ENCODE measurements at regions of chr19 and their contacts with region 1.

Region 1: GRCh38 chr19:15810335-15810734 is 5.1 kb downstream of the OR10H1 start:
- DNase-seq: peak; percentile 81
- ATAC-seq: peak; percentile 70
- H3K4me3 ChIP-seq: peak overlapping the region; percentile 36
- H3K27ac ChIP-seq: no peak overlapping the region
- H3K4me1 ChIP-seq: no peaks in the 10 kb centered on the region
- H3K27me3 ChIP-seq: no peaks in the 10 kb centered on the region
- CTCF ChIP-seq: peak; percentile 77

Region 2: DNA sequence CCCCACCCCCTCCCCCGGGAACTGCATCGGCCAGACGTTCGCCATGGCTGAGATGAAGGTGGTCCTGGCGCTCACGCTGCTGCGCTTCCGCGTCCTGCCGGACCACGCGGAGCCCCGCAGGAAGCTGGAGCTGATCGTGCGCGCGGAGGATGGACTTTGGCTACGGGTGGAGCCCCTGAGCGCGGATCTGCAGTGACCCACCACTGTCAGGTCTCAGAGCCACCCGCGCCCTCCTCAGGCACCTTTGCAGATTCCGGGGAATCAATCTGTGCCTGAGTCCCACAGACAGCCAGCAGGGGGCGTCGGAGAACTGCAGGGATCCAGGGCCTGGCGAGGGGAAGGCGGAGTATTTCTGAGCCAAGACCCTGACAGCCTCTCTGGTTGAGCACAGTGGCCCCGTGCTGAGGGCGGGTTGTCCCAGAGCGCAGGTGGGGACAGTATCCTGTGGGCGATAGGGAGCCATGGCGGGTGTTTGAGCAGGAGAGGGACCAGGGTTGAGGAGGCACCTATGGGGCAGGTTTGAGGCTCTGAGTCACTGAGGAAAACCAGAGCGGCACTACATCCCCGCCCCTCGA is 225.7 kb before region 1 on chr19:
- CTCF ChIA-PET with region 1: no interaction called
- POLR2A ChIA-PET with region 1: no interaction called
- intact Hi-C with region 1: loop called (anchors 2 kb)
- DNase-seq: peak; percentile 80
- ATAC-seq: peak; percentile 94
- H3K4me3 ChIP-seq: no peak overlapping the region
- H3K27ac ChIP-seq: no peak overlapping the region
- H3K4me1 ChIP-seq: no peaks in the 10 kb centered on the region
- H3K27me3 ChIP-seq: peaks cover 32% of the 10 kb centered on the region
- CTCF ChIP-seq: peak; percentile 93

Region 3: GRCh38 chr19:15869109-15869555 is 58.8 kb after region 1 on chr19:
- CTCF ChIA-PET with region 1: interaction called, 5 read pairs
- POLR2A ChIA-PET with region 1: no interaction called
- intact Hi-C with region 1: loop called (anchors 1 kb)
- DNase-seq: peak; percentile 69
- ATAC-seq: peak; percentile 84
- H3K4me3 ChIP-seq: no peak overlapping the region
- H3K27ac ChIP-seq: no peak overlapping the region
- H3K4me1 ChIP-seq: peaks cover 4% of the 10 kb centered on the region
- H3K27me3 ChIP-seq: no peaks in the 10 kb centered on the region
- CTCF ChIP-seq: peak; percentile 77

Region 4: DNA sequence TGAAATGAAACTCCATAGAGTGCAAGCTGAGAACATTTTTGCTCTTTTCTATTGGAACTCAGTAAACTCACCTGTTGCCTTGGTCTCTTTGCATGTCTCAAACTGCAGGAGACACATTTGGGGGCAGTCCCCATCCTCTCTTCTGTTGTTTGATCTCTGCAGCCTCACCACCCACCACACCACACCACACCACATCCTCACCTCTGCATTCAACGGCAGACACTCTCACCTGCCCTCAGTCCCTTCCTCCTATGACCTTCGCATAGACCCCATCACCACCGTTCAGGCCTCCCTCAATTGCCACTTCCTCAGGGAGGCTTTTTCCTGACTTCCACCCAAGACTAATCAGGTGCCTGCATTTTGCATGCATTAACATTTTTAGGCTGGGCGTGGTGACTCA is 251.6 kb after region 1 on chr19:
- CTCF ChIA-PET with region 1: no interaction called
- POLR2A ChIA-PET with region 1: no interaction called
- intact Hi-C with region 1: no loop called
- DNase-seq: no peak
- ATAC-seq: no peak
- H3K4me3 ChIP-seq: no peak overlapping the region
- H3K27ac ChIP-seq: no peak overlapping the region
- H3K4me1 ChIP-seq: peaks cover 4% of the 10 kb centered on the region
- H3K27me3 ChIP-seq: no peaks in the 10 kb centered on the region
- CTCF ChIP-seq: no peak

Measured in PC-3 (cell line).